Caco-2 (cell line): ENCODE measurements at regions of chr4 and their contacts with region 1.

Region 1: GRCh38 chr4:30789219-30789671 is 69.1 kb downstream of the PCDH7 start:
- DNase-seq: peak; percentile 47 to 63
- H3K4me3 ChIP-seq: no peak overlapping the region
- H3K4me3 Mint-ChIP-seq: peak overlapping the region; percentile 54
- H3K27ac Mint-ChIP-seq: peak overlapping the region; percentile 36
- H3K4me1 ChIP-seq: peaks cover 25% of the 10 kb centered on the region
- H3K4me1 Mint-ChIP-seq: peaks cover 12% of the 10 kb centered on the region
- H3K27me3 ChIP-seq: no peaks in the 10 kb centered on the region
- H3K27me3 Mint-ChIP-seq: no peaks in the 10 kb centered on the region
- CTCF ChIP-seq: no peak

Region 2: GRCh38 chr4:30719460-30720020 is 69.7 kb before region 1 on chr4:
- CTCF ChIA-PET with region 1: no interaction called
- POLR2A ChIA-PET with region 1: no interaction called
- intact Hi-C with region 1: loop called (anchors 1 kb)
- DNase-seq: peak; percentile 57 to 62
- H3K4me3 ChIP-seq: peak overlapping the region; percentile 58
- H3K4me3 Mint-ChIP-seq: peak overlapping the region; percentile 87
- H3K27ac Mint-ChIP-seq: peak overlapping the region; percentile 85
- H3K4me1 ChIP-seq: peaks cover 3% of the 10 kb centered on the region; the same call in 1 of the 2 replicates
- H3K4me1 Mint-ChIP-seq: no peaks in the 10 kb centered on the region
- H3K27me3 ChIP-seq: no peaks in the 10 kb centered on the region
- H3K27me3 Mint-ChIP-seq: no peaks in the 10 kb centered on the region
- CTCF ChIP-seq: no peak

Region 3: DNA sequence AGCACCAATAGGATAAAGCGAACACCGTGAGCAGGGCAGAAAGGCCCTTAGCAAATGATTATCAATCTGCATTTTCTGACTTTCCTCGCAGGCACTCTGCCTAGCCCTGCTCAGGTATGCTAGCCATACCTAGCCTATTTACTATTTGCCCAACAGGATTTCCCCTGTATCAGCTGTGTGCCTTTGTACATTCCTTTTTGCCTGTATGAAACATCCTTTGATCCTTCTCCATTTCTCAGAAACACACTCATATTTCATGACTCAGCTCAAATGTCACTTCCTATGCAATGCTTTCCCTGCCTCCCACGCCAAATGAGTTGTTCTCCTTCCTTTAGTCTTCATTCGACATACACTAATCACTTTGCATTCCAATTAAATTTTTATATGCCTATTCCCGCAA is 31.9 kb before region 1 on chr4:
- CTCF ChIA-PET with region 1: no interaction called
- POLR2A ChIA-PET with region 1: no interaction called
- intact Hi-C with region 1: loop called (anchors 1 kb)
- DNase-seq: peak; percentile 73 to 81
- H3K4me3 ChIP-seq: no peak overlapping the region
- H3K4me3 Mint-ChIP-seq: no peak overlapping the region
- H3K27ac Mint-ChIP-seq: no peak overlapping the region
- H3K4me1 ChIP-seq: peaks cover 62% of the 10 kb centered on the region
- H3K4me1 Mint-ChIP-seq: peaks cover 7% of the 10 kb centered on the region
- H3K27me3 ChIP-seq: no peaks in the 10 kb centered on the region
- H3K27me3 Mint-ChIP-seq: no peaks in the 10 kb centered on the region
- CTCF ChIP-seq: no peak